Mammary epithelial cell (primary cell): ENCODE measurements at regions of chr3 and their contacts with region 1.

Region 1: DNA sequence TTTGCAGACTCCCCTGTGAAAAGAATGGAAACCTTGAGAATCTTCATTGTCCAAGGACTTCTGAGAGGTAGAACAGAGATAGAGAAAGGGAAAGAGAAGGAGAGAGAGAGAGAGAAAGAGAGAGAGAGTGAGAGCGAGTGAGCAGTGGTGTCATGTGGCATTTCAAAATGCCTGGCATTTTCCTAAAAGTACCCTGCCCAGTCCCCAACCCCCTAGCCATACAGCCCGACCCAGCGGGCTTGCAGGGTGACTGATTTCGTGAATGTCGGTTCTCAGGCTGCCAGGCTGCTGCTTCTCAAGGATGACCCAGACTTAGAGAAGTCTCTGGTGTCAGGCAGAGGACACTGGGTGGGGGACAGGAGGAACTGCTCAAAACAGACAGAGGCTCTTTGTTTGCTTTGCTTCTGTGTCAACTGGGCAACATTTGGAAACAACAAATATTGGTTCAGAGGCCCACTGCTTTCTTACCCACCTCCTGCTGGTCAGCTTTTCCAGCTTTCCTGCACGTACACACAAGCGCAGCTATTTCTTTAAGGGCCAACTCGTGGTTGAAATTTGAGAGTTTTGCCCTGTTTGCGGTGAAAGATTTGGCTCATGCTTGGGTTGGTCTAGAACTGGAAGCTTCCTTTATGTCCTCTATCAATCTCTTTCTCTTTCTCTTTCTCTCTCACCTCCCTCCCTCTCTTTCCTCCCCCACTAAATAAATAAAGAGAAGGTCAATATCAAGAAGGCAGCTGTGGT is 3.7 kb upstream of the TF start:
- DNase-seq: peak; percentile 57
- H3K4me3 ChIP-seq: no peak overlapping the region
- H3K27ac ChIP-seq: no peak overlapping the region
- H3K4me1 ChIP-seq: peaks cover 8% of the 10 kb centered on the region
- H3K27me3 ChIP-seq: peaks cover 16% of the 10 kb centered on the region
- CTCF ChIP-seq: no peak

Region 2: GRCh38 chr3:133694288-133695268 is 47.9 kb before region 1 on chr3:
- CTCF ChIA-PET with region 1: no interaction called
- dilution Hi-C with region 1: loop called (anchors 5 kb)
- in situ Hi-C with region 1: no loop called
- intact Hi-C with region 1: no loop called
- DNase-seq: no peak
- H3K4me3 ChIP-seq: no peak overlapping the region
- H3K27ac ChIP-seq: no peak overlapping the region
- H3K4me1 ChIP-seq: no peaks in the 10 kb centered on the region
- H3K27me3 ChIP-seq: peaks cover 3% of the 10 kb centered on the region
- CTCF ChIP-seq: no peak

Region 3: DNA sequence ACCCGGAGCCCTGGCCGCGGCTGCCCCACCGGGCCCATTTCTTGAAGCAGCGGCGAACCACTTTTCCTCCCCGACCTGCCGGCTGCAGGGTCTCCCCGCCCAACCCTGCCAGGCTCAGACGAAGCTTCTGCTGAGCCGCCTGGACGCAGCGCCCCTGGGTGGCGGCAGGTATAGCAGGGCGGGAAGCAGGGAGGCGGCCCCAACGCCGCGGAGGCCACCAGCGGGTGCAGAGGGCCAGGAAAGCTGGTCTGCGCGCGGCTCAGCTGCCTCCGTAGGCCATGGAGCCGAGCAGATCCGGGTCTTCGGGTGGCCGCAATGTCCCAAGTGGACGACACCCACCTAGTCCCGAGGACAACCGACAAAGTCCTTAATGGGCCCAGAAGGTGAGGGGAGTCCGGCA is 41.2 kb after region 1 on chr3:
- CTCF ChIA-PET with region 1: no interaction called
- dilution Hi-C with region 1: loop called (anchors 5 kb)
- in situ Hi-C with region 1: no loop called
- intact Hi-C with region 1: no loop called
- DNase-seq: no peak
- H3K4me3 ChIP-seq: no peak overlapping the region
- H3K27ac ChIP-seq: no peak overlapping the region
- H3K4me1 ChIP-seq: no peaks in the 10 kb centered on the region
- H3K27me3 ChIP-seq: peaks cover 2% of the 10 kb centered on the region
- CTCF ChIP-seq: no peak

Region 4: GRCh38 chr3:133851266-133851906 is 108.9 kb after region 1 on chr3:
- CTCF ChIA-PET with region 1: no interaction called
- dilution Hi-C with region 1: no loop called
- in situ Hi-C with region 1: no loop called
- intact Hi-C with region 1: no loop called
- DNase-seq: no peak
- H3K4me3 ChIP-seq: no peak overlapping the region
- H3K27ac ChIP-seq: no peak overlapping the region
- H3K4me1 ChIP-seq: no peaks in the 10 kb centered on the region
- H3K27me3 ChIP-seq: no peaks in the 10 kb centered on the region
- CTCF ChIP-seq: no peak